H1 (cell line): ENCODE measurements at regions of chr10 and their contacts with region 1.

Region 1: DNA sequence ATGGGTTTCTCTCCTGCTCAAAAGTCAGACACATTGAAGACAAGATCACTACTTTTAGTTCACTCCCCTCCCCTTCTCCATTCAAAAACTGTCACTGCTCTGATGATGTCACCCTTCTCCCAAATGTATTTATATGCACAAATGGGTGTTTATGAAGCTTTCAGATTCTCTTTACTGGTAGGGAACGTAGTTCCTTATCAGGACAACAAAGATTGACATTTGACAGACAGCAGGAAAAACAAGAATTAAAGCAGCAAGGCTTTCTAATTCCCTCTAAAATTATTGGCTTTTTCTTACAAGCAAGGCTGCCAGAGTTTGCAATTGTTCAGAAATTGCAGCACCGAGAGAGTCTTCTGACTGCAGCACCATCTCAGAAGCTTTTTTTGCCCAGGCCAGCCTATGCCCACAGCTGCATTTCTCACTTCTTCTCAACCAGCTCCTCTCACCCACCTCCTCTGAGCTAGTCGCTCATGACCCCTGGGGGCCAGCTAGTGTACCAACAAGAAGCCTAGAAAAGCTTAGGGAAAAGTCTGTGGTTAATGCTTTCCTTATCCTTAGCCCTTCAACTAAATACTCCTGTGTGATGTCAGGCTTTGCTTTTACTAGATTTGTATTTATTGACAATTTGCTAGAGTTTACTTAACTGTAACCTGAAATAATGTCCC is 265.1 kb downstream of the HTR7 start:
- DNase-seq: peak; percentile 51 to 59
- H3K4me3 ChIP-seq: no peak overlapping the region
- H3K27ac ChIP-seq: no peak overlapping the region
- H3K4me1 ChIP-seq: no peaks in the 10 kb centered on the region
- H3K27me3 ChIP-seq: no peaks in the 10 kb centered on the region
- CTCF ChIP-seq: peak; percentile 57 to 81 (median 75)
- EP300 ChIP-seq: no peak
- POLR2A ChIP-seq: no peak
- RAD21 ChIP-seq: peak; percentile 96 to 97

Region 2: DNA sequence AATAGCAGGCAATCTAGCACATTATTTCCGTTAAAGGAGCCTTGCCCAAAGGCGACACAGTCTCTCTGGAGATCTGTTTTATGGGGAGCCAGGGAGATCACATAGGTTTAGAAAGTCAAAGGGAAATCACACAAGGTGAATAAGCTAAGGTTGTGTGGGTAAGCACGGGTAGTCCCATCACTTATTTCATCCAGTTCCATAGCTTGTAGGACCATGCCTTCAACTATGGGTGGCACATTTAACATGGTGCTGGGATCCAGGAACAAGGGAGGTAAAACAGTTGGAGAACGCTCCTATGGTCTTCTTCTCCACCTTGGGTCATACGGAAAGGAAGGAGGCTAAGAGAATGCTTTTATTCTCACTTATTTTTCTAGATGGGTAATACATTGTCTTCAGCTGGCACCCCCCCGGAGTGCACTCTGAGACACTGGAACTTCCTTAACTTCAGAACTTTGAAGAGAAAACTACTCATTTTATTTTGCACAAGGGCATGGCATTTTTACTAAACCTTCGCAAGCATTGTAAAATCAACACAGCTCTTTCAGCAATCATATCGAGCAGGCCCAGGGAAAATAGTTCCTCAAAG is 455.9 kb before region 1 on chr10:
- CTCF ChIA-PET with region 1: interaction called, 10 read pairs
- POLR2A ChIA-PET with region 1: no interaction called
- DNase-seq: peak in 1 of 2 experiments; percentile 54
- H3K4me3 ChIP-seq: no peak overlapping the region
- H3K27ac ChIP-seq: no peak overlapping the region
- H3K4me1 ChIP-seq: no peaks in the 10 kb centered on the region
- H3K27me3 ChIP-seq: no peaks in the 10 kb centered on the region
- CTCF ChIP-seq: no peak
- EP300 ChIP-seq: no peak
- POLR2A ChIP-seq: no peak
- RAD21 ChIP-seq: no peak

Region 3: GRCh38 chr10:90148116-90148855 is 444.5 kb before region 1 on chr10:
- CTCF ChIA-PET with region 1: interaction called, 14 read pairs
- POLR2A ChIA-PET with region 1: no interaction called
- DNase-seq: no peak
- H3K4me3 ChIP-seq: no peak overlapping the region
- H3K27ac ChIP-seq: no peak overlapping the region
- H3K4me1 ChIP-seq: no peaks in the 10 kb centered on the region
- H3K27me3 ChIP-seq: no peaks in the 10 kb centered on the region
- CTCF ChIP-seq: peak in 2 of 3 experiments; percentile 51 to 75; a peak in 2 of 4 replicates
- EP300 ChIP-seq: no peak
- POLR2A ChIP-seq: no peak
- RAD21 ChIP-seq: peak; percentile 79 to 82

Region 4: DNA sequence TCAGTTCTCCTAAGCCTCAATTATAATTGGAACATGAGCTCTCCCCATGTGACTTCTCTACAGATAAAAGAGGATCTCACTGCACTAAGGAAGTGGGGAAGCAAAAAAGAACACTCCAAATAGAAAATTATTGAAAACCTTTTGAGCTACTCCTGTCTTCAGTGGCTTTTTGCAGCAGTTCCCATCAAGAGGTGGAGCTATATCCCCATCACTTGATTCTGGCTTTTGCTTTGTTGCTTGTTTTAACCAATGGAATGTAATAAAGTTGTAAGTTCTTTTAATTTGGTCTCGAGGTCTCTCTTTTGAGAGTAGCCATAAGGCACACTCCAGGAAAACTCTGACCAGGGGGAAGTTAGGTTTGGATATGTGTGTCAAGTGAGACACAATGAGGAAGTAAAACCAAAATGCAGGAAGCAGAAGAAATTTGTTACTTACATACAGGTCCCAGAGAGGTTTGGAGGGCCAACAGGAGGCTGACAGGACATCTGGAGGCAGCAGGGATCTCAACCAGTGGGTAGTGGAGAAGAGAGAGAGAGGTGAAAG is 304.3 kb before region 1 on chr10:
- CTCF ChIA-PET with region 1: interaction called, 31 read pairs
- POLR2A ChIA-PET with region 1: no interaction called
- DNase-seq: no peak
- H3K4me3 ChIP-seq: no peak overlapping the region
- H3K27ac ChIP-seq: no peak overlapping the region
- H3K4me1 ChIP-seq: peaks cover 0 to 11% (median 0%) of the 10 kb centered on the region in 4 experiments; a peak in 1 of 7 replicates
- H3K27me3 ChIP-seq: no peaks in the 10 kb centered on the region
- CTCF ChIP-seq: peak in 2 of 3 experiments; percentile 33 to 52; a peak in 3 of 4 replicates
- EP300 ChIP-seq: no peak
- POLR2A ChIP-seq: no peak
- RAD21 ChIP-seq: peak; percentile 79 to 80

Region 5: DNA sequence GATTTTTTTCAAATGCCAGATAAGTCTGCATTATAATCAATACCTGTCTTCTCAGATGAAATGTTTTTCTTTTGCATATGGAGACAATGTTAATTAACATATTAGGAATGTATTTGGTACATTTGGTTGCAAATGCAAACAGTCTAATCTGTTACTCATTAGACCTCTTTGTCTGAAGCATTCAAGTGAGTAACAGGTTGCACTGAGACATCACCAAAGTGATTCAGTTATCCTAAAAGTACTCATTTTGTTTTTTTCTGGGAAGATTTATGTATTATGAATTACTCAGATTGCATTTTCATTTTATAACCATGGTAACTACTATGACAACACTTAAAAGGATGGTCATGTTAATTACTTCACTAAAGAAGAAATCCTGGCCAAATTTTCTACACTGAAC is 248.5 kb before region 1 on chr10:
- CTCF ChIA-PET with region 1: interaction called, 10 read pairs
- POLR2A ChIA-PET with region 1: no interaction called
- DNase-seq: no peak
- H3K4me3 ChIP-seq: no peak overlapping the region
- H3K27ac ChIP-seq: no peak overlapping the region
- H3K4me1 ChIP-seq: no peaks in the 10 kb centered on the region
- H3K27me3 ChIP-seq: no peaks in the 10 kb centered on the region
- CTCF ChIP-seq: no peak
- EP300 ChIP-seq: no peak
- POLR2A ChIP-seq: no peak
- RAD21 ChIP-seq: no peak

Region 6: DNA sequence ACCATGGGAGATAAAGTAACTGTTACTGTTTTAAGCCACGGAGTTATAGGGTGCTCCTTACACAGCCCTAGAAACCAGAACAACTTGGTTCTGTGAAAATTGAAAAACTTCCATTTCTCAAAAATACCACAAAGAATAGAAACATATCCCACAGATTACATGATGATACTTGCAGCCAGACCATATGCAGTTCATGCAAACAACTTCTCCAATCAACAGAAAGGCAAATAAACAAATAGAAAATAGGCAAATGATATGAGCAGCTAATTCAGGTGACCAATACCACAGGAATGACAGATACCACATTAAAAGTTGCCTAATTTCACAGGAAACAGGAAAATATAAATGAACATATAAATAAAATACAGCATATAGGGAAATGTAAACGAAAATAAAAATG is 32.4 kb before region 1 on chr10:
- CTCF ChIA-PET with region 1: no interaction called
- POLR2A ChIA-PET with region 1: no interaction called
- DNase-seq: no peak
- H3K4me3 ChIP-seq: no peak overlapping the region
- H3K27ac ChIP-seq: no peak overlapping the region
- H3K4me1 ChIP-seq: no peaks in the 10 kb centered on the region; a peak in 1 of 7 replicates
- H3K27me3 ChIP-seq: no peaks in the 10 kb centered on the region
- CTCF ChIP-seq: no peak
- EP300 ChIP-seq: no peak
- POLR2A ChIP-seq: no peak
- RAD21 ChIP-seq: no peak

Region 7: DNA sequence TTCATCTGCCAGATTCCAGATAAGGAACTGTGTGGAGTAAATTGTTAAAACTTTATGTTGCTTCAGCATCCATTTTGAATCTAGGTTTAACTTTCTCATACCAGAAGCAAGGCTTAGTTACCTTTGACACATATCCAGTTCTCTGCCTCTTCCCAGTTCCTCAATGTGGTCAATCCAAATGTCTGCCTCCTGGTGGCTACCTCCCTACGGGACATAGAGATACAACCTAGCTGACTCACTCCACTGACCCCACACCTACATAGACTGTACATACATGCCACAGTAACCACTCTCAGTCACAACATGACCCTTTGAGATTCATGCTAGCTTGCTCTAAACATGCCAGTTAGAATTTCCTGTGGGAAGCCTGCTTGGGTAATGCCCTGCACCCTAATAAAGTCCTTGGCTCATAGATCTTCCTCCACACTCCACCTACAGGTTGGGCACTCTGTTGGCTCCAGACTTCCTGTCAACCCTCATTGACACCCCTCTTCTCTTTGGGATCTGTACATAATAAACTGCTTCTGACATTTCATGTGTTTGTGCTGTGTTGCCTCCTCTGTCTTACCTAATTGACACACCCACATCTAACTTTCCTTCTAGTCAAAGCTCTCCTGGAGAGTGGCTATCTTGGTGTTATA is 13.0 kb before region 1 on chr10:
- CTCF ChIA-PET with region 1: interaction called, 13 read pairs
- POLR2A ChIA-PET with region 1: interaction called, 3 read pairs
- DNase-seq: peak in 1 of 2 experiments; percentile 15
- H3K4me3 ChIP-seq: no peak overlapping the region
- H3K27ac ChIP-seq: no peak overlapping the region
- H3K4me1 ChIP-seq: no peaks in the 10 kb centered on the region
- H3K27me3 ChIP-seq: no peaks in the 10 kb centered on the region
- CTCF ChIP-seq: peak; percentile 44 to 61 (median 56)
- EP300 ChIP-seq: no peak
- POLR2A ChIP-seq: no peak
- RAD21 ChIP-seq: peak; percentile 58 to 69